ENCODE measurements at regions of chr20 and their contacts with region 1.

Region 1: DNA sequence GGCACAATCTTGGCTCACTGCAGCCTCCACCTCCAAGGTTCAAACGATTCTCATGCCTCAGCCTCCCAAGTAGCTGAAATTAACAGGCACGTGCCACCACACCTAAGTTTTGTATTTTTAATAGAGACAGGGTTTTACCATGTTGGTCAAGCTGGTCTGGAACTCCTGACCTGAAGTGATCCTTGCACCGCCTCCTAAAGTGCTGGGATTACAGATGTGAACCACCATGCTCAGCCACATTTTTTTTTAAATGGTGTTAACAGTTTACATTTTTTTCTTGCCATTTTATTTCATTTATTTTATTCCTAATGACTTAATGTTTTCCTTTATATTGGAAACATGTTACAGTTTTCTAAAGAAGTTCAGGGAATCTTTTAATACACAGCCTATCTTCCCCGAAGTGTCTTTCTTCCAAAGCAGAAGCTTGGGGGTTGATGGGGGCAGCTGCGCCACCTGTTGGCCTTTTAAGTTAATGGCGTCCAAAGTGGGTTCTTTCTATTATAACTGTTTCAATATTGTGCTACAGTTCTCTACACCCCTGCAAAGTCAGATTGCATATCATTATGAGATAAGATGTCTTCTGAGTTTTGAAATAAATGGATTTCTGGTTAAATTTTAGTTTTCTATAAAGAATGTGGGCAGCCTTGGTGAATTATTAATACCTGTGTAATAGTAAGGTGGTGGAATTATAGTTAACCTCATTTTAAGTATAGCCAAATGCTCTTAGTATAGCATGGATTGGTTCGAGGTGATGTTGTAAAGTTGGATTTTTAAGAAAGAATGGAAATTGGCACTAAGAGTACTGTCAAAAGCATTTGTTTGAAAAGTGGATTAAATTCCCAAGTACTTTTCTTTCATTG is 42.0 kb upstream of the PLCG1 start:
- DNase-seq: peak; percentile 68
- ATAC-seq: peak; percentile 54
- H3K4me3 Mint-ChIP-seq: no peak overlapping the region
- H3K27ac Mint-ChIP-seq: no peak overlapping the region
- H3K4me1 Mint-ChIP-seq: peaks cover 10% of the 10 kb centered on the region
- H3K27me3 Mint-ChIP-seq: no peaks in the 10 kb centered on the region

Region 2: DNA sequence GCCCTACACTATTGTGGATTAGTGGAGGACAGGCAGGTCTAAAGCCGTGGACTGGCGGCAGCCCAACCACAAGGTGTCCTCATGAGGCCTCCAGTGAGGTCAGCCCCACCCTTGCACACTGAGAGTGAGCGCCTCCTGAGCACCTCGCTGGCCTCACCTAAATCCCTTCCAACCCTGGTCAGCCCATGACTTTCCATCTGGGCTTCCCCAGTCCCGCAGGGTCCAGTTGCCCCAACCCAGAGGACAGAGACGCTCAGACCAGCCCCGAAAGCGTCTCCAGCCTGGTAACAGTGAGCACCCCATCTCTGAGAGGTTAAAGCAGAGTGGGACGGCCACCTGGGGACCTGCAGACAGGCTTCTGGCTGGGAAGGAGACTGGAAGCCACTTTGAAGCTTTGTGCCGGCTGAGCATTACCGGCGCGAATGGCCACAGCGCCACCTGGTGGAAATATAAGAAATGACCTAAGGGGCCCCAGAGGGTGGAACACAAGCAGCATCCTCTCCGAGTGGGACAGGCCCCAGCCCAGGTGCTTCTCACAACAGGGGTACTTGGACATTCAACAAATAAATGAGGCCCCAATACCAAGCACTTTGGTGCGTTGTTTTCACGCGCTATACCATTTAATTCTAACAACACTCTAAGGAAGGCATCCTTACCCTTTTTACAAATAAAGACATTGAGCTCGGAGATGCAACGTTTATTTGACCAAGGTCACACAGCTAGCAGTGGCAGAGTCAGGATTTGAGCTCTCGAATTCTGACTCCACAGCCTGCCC is 132.4 kb before region 1 on chr20:
- CTCF ChIA-PET with region 1: interaction called, 43 read pairs
- POLR2A ChIA-PET with region 1: no interaction called
- intact Hi-C with region 1: loop called (anchors 1 kb)
- DNase-seq: peak; percentile 85
- ATAC-seq: peak; percentile 88
- H3K4me3 Mint-ChIP-seq: no peak overlapping the region
- H3K27ac Mint-ChIP-seq: no peak overlapping the region
- H3K4me1 Mint-ChIP-seq: peaks cover 8% of the 10 kb centered on the region
- H3K27me3 Mint-ChIP-seq: no peaks in the 10 kb centered on the region

Region 3: GRCh38 chr20:41003143-41003883 is 92.0 kb before region 1 on chr20:
- CTCF ChIA-PET with region 1: interaction called, 11 read pairs
- POLR2A ChIA-PET with region 1: no interaction called
- intact Hi-C with region 1: no loop called
- DNase-seq: peak; percentile 83
- ATAC-seq: peak; percentile 89
- H3K4me3 Mint-ChIP-seq: peak overlapping the region; percentile 28
- H3K27ac Mint-ChIP-seq: peak overlapping the region; percentile 89
- H3K4me1 Mint-ChIP-seq: peaks cover 37% of the 10 kb centered on the region
- H3K27me3 Mint-ChIP-seq: no peaks in the 10 kb centered on the region

Region 4: GRCh38 chr20:41047975-41048305 is 47.4 kb before region 1 on chr20:
- CTCF ChIA-PET with region 1: interaction called, 12 read pairs
- POLR2A ChIA-PET with region 1: interaction called, 3 read pairs
- intact Hi-C with region 1: loop called in 1 of 2 experiments (anchors 1 kb)
- DNase-seq: no peak
- ATAC-seq: peak; percentile 46
- H3K4me3 Mint-ChIP-seq: peak overlapping the region; percentile 72
- H3K27ac Mint-ChIP-seq: peak overlapping the region; percentile 87
- H3K4me1 Mint-ChIP-seq: peaks cover 89% of the 10 kb centered on the region
- H3K27me3 Mint-ChIP-seq: no peaks in the 10 kb centered on the region

Region 5: DNA sequence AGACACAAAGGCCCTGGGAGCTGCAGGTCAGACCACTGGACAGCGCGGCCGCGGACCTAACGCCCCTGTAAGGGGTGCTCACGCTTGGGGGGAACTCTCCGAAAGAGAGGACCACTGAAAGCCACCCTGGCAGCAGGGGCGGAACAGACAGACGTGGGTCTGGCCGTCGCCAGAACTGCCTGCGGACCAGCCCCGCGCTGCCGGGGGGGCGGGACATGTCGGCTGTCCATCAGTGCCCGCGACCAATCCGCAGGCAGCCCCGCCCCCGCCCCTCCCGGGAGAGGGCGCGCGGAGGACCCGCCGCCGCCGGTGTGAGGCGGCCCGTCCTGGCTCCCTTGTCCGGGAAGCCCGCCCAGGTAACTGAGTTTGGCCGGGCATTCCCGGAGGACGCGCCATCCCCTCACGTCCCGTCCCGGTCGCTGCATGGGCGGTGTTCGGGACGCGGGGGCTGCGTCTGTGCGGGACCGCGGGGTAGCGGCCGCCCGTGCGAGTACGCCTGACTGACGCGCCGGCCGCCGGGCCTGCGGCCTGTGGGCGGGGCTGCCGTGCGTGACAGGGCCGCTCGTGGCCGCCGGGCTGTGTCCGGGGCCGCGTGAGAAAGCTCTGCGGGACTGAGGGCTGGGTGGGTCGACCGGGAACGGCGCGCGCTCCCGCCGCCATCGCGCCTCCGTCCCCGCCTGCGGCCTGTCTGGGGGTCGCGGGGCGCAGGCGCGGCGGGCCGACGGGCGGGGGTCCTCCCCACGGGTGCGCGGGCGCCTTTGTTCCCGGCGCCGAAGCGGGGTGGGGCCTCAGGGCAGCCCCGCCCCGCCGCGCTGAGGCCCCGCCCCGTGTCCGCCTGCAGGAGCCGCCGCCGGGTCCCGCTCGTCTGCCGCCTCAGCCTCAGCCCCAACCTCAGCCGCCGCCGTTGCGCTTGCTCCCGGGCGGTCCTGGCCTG is 41.6 kb after region 1 on chr20 and contains the start of gene PLCG1:
- CTCF ChIA-PET with region 1: interaction called, 10 read pairs
- POLR2A ChIA-PET with region 1: no interaction called
- intact Hi-C with region 1: no loop called
- DNase-seq: peak; percentile 93
- ATAC-seq: peak; percentile 62
- H3K4me3 Mint-ChIP-seq: peak within 1 kb of the TSS; percentile 86
- H3K27ac Mint-ChIP-seq: peak within 1 kb of the TSS; percentile 92
- H3K4me1 Mint-ChIP-seq: peaks cover 65% of the 10 kb centered on the region
- H3K27me3 Mint-ChIP-seq: no peaks in the 10 kb centered on the region
- total RNA-seq, gene PLCG1: 185 to 230 TPM